HCT116 (cell line): ENCODE measurements at regions of chr2 and their contacts with region 1.

Region 1: DNA sequence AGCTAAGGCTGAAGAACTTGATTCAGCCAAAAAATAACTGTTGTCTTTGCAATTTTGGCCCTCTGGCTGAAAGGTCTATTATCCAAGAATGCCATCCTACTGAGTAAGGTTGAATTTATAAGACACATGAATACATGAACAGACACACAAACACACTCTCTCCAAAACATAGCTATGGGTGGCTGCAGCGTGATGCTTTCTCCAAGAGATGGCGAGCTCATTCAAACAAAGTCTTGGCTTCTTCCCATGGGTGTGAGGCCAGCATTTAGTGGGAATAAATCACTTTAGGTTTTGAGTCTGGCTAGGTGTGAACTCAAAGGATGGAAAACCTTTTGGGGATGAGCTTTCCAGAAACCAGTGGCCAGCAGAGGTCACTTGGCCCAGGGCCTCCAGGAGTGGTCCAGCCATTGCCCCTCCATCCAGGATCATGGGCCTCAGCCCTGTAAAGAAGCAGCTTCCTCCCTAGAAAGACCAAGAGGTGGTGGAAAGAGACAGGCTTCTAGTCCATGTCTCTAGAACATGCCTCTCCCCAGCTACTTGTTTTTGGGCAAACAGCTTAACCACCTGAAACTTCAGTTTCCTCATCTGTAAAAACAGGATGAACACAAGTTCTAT is 11.0 kb upstream of the OSR1 start:
- DNase-seq: peak; percentile 12
- ATAC-seq: peak; percentile 76
- H3K4me3 ChIP-seq: no peak overlapping the region
- H3K27ac ChIP-seq: no peak overlapping the region
- H3K4me1 ChIP-seq: no peaks in the 10 kb centered on the region
- H3K27me3 ChIP-seq: peaks cover 4% of the 10 kb centered on the region; the same call in 1 of the 2 replicates
- CTCF ChIP-seq: peak; percentile 40 to 79 (median 56)
- POLR2A ChIP-seq: no peak
- RAD21 ChIP-seq: peak; percentile 83

Region 2: DNA sequence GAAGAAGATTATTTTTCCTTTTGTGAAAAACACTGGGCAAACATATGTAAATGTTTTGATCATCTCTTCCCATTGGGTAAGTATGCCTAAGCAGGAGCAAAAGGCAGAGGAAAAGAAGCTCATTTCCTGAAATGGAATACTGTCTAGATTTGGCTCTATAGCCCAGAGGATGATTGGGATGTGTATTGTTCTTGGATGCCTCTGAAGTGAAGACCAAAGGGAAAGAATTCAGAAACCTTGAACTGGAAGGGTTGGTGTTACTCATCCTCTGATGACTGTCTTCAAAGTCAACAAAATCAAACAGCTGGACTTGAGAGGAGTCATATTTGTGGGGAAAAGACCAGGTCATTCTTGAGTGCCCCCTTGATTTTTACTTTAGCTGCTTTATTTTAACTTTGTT is 667.5 kb before region 1 on chr2:
- CTCF ChIA-PET with region 1: no interaction called
- POLR2A ChIA-PET with region 1: no interaction called
- RAD21 ChIA-PET with region 1: no interaction called
- intact Hi-C with region 1: no loop called
- DNase-seq: no peak
- ATAC-seq: no peak
- H3K4me3 ChIP-seq: no peak overlapping the region
- H3K27ac ChIP-seq: no peak overlapping the region
- H3K4me1 ChIP-seq: no peaks in the 10 kb centered on the region
- H3K27me3 ChIP-seq: no peaks in the 10 kb centered on the region
- CTCF ChIP-seq: no peak
- POLR2A ChIP-seq: no peak
- RAD21 ChIP-seq: no peak

Region 3: DNA sequence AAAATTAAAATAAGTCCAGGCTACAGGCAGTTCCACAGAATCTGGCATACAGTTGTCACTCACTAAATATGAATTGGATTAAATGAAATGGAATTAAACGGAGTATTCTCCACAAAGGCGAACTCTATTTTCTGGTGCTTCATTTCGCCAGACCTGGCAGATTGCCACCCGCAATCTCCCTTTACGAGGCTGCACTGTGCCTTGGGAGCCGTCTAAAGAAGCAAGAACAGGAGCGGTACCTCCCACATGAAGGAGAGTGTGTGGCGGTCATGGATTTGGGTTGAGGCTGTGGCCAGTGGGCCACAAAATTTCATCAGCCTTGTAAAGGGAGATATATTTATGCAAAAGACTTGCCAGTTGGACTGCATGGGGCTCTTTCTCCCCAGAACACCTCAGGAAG is 162.0 kb before region 1 on chr2:
- CTCF ChIA-PET with region 1: no interaction called
- POLR2A ChIA-PET with region 1: no interaction called
- RAD21 ChIA-PET with region 1: no interaction called
- intact Hi-C with region 1: no loop called
- DNase-seq: no peak
- ATAC-seq: no peak
- H3K4me3 ChIP-seq: no peak overlapping the region
- H3K27ac ChIP-seq: no peak overlapping the region
- H3K4me1 ChIP-seq: no peaks in the 10 kb centered on the region
- H3K27me3 ChIP-seq: no peaks in the 10 kb centered on the region
- CTCF ChIP-seq: no peak
- POLR2A ChIP-seq: no peak
- RAD21 ChIP-seq: no peak

Region 4: DNA sequence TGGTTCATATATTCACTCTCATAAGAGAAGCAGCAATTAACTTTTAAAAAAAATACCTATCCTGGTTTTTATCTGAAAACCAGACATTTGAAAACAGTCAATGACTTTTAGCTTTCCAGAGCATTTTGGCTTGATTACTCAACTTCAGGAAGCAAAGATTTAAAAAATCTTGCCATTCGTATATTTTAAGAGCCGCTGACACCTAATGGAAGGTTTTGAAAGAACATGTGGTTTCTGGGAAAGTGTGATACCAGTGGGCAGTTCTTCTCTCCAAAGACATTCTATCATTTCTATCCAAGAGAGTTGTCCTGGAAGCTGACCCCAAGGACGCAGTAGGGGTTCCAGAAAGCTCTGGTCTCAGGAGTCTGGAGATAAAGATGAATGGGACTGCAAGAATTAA is 297.6 kb after region 1 on chr2:
- CTCF ChIA-PET with region 1: interaction called, 48 read pairs
- POLR2A ChIA-PET with region 1: no interaction called
- RAD21 ChIA-PET with region 1: interaction called, 4 to 7 read pairs
- intact Hi-C with region 1: loop called (anchors 1 kb)
- DNase-seq: peak; percentile 41
- ATAC-seq: peak; percentile 73
- H3K4me3 ChIP-seq: no peak overlapping the region
- H3K27ac ChIP-seq: no peak overlapping the region
- H3K4me1 ChIP-seq: peaks cover 4 to 6% of the 10 kb centered on the region in 2 experiments; a peak in 3 of 4 replicates
- H3K27me3 ChIP-seq: no peaks in the 10 kb centered on the region
- CTCF ChIP-seq: peak; percentile 42 to 72 (median 53)
- POLR2A ChIP-seq: no peak
- RAD21 ChIP-seq: peak; percentile 83

Region 5: GRCh38 chr2:19746611-19747309 is 377.3 kb after region 1 on chr2:
- CTCF ChIA-PET with region 1: interaction called, 22 read pairs
- POLR2A ChIA-PET with region 1: no interaction called
- RAD21 ChIA-PET with region 1: no interaction called
- intact Hi-C with region 1: loop called (anchors 1 kb)
- DNase-seq: no peak
- ATAC-seq: peak; percentile 72
- H3K4me3 ChIP-seq: no peak overlapping the region
- H3K27ac ChIP-seq: no peak overlapping the region
- H3K4me1 ChIP-seq: peaks cover 0 to 5% of the 10 kb centered on the region in 2 experiments; a peak in 1 of 4 replicates
- H3K27me3 ChIP-seq: no peaks in the 10 kb centered on the region
- CTCF ChIP-seq: peak; percentile 15 to 56 (median 53); a peak in 4 of 6 replicates
- POLR2A ChIP-seq: no peak
- RAD21 ChIP-seq: peak; percentile 68